ENCODE measurements at regions of chr11 and their contacts with region 1.

Region 1: GRCh38 chr11:12680246-12680939 is 6.2 kb downstream of the TEAD1 start:
- DNase-seq: peak; percentile 72 to 75
- H3K4me3 ChIP-seq: peak overlapping the region; percentile 94; the same call in 1 of the 2 replicates
- H3K27ac ChIP-seq: peak overlapping the region; percentile 61
- H3K4me1 ChIP-seq: peaks cover 77% of the 10 kb centered on the region
- H3K27me3 ChIP-seq: no peaks in the 10 kb centered on the region
- CTCF ChIP-seq: no peak

Region 2: GRCh38 chr11:12769834-12770345 is 89.5 kb after region 1 on chr11:
- CTCF ChIA-PET with region 1: no interaction called
- POLR2A ChIA-PET with region 1: no interaction called
- intact Hi-C with region 1: loop called (anchors 2 kb)
- DNase-seq: peak; percentile 31 to 94
- H3K4me3 ChIP-seq: no peak overlapping the region
- H3K27ac ChIP-seq: peak overlapping the region; percentile 88
- H3K4me1 ChIP-seq: peaks cover 46% of the 10 kb centered on the region
- H3K27me3 ChIP-seq: no peaks in the 10 kb centered on the region
- CTCF ChIP-seq: no peak